A673 (cell line): ENCODE measurements at regions of chr3 and their contacts with region 1.

Region 1: GRCh38 chr3:182182531-182182968 is 470.8 kb downstream of the SOX2 start:
- DNase-seq: peak; percentile 85
- H3K4me3 ChIP-seq: no peak overlapping the region
- H3K27ac ChIP-seq: peak overlapping the region; percentile 90
- H3K4me1 ChIP-seq: peaks cover 44% of the 10 kb centered on the region
- H3K27me3 ChIP-seq: no peaks in the 10 kb centered on the region
- CTCF ChIP-seq: no peak

Region 2: DNA sequence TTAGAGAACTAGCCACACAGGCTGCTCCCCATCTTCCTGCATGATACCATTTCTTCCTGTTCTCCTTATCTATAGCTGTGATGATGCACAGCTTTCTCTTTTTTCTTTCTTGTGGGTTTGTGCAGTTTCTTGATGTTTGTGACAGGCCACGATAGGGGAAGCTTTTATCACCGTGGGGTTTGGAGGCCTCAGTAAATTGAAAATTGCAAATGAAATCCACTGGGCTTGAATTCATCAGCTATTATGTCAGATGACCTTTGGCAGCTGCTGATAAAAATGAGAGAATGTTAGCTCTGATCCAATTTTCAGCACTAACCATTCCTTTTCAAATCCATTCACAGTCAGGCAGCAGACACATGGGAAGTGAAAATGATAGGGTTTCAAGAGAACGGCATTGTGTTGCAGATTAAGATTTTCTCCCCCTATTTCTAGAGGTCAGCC is 647.7 kb before region 1 on chr3:
- CTCF ChIA-PET with region 1: no interaction called
- POLR2A ChIA-PET with region 1: no interaction called
- intact Hi-C with region 1: no loop called
- DNase-seq: no peak
- H3K4me3 ChIP-seq: no peak overlapping the region
- H3K27ac ChIP-seq: no peak overlapping the region
- H3K4me1 ChIP-seq: no peaks in the 10 kb centered on the region
- H3K27me3 ChIP-seq: peaks cover 20% of the 10 kb centered on the region
- CTCF ChIP-seq: no peak

Region 3: GRCh38 chr3:181909241-181909640 is 273.3 kb before region 1 on chr3:
- CTCF ChIA-PET with region 1: interaction called, 3 read pairs
- POLR2A ChIA-PET with region 1: no interaction called
- intact Hi-C with region 1: loop called (anchors 1 kb)
- DNase-seq: peak; percentile 79
- H3K4me3 ChIP-seq: no peak overlapping the region
- H3K27ac ChIP-seq: peak overlapping the region; percentile 55
- H3K4me1 ChIP-seq: peaks cover 12% of the 10 kb centered on the region
- H3K27me3 ChIP-seq: no peaks in the 10 kb centered on the region
- CTCF ChIP-seq: no peak

Region 4: DNA sequence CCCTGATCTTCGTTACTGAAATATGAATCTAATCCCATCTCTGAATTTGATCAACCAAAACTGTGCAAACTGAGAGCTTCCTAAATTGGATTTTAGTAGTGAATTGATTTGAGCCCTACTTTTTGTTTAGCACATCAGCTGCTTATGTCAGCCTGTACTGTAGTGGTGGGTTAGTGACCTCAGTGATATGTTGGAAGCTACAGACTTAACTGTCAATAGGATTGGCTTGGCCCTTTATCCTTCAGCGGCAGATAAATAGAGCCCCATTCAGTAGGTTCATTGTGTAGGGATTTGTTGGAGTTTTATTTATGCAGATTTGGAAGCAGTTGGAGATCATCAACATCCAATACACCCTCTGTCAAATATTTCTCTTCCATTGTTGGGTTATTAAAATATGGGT is 61.1 kb before region 1 on chr3:
- CTCF ChIA-PET with region 1: no interaction called
- POLR2A ChIA-PET with region 1: no interaction called
- intact Hi-C with region 1: loop called (anchors 2 kb)
- DNase-seq: no peak
- H3K4me3 ChIP-seq: no peak overlapping the region
- H3K27ac ChIP-seq: no peak overlapping the region
- H3K4me1 ChIP-seq: peaks cover 48% of the 10 kb centered on the region
- H3K27me3 ChIP-seq: no peaks in the 10 kb centered on the region
- CTCF ChIP-seq: no peak

Region 5: DNA sequence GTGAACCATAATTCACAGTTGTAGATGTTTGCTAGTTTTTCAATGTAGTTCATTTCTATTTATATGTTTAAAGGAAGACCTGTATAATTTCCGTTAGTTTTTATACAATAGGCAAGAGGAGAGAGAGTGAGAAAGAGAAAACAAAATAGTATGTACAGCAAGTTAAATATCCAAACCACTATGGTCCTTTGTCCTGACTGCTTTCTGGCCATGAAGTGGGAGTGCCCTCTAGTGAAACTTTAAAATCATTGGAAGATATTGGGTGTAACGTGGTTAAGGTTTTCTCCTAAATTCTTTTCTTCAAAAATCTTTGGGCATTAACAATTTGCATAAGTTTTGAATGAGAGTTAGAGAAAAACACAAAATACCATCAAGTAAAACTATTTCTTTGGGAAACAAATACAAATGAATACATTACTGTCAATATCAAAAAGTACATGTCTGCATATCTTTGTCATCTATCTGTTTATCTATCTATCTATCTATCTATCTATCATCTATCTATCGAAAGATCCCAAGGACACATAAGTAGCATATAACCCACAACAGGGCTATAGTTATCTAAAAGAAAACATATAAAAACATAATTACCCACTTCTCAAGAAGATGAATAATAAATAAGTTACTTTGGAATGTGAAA is 76.1 kb after region 1 on chr3:
- CTCF ChIA-PET with region 1: interaction called, 5 read pairs
- POLR2A ChIA-PET with region 1: no interaction called
- intact Hi-C with region 1: loop called (anchors 1 kb)
- DNase-seq: peak; percentile 78
- H3K4me3 ChIP-seq: no peak overlapping the region
- H3K27ac ChIP-seq: no peak overlapping the region
- H3K4me1 ChIP-seq: peaks cover 7% of the 10 kb centered on the region
- H3K27me3 ChIP-seq: no peaks in the 10 kb centered on the region
- CTCF ChIP-seq: peak; percentile 77

Region 6: GRCh38 chr3:182473191-182473710 is 290.7 kb after region 1 on chr3:
- CTCF ChIA-PET with region 1: no interaction called
- POLR2A ChIA-PET with region 1: no interaction called
- intact Hi-C with region 1: loop called (anchors 2 kb)
- DNase-seq: peak; percentile 56
- H3K4me3 ChIP-seq: no peak overlapping the region
- H3K27ac ChIP-seq: peak overlapping the region; percentile 66
- H3K4me1 ChIP-seq: peaks cover 7% of the 10 kb centered on the region
- H3K27me3 ChIP-seq: no peaks in the 10 kb centered on the region
- CTCF ChIP-seq: no peak

Region 7: DNA sequence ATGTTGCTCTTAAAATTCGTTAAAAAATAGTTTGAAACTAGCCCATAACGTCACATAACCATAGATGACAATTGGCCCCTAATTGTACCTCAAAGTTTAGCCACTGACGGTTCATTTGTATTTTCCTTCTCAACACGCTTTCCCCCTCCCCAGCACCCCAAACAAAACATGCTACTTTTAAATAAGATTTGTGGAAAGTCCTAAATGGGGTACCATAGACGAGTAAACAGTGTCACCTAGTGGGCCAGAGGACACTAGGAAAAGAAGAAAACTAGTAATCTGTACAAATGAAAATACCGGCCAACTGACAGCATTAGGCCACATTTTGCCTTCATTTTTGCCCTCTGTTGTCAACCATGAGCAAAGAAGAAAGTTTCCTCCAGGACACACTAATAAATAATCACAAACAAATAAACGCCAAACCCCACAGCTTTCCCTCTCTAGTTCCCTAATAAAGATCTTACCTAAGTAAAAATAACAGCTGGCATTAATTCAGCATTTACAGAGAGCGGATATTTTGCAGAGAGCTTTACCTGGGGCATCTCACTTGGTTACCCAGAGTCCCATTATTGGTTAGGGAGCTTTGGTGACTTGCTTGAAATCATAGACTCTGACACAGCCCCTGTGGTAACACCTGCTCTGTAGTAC is 435.7 kb after region 1 on chr3:
- CTCF ChIA-PET with region 1: no interaction called
- POLR2A ChIA-PET with region 1: no interaction called
- intact Hi-C with region 1: loop called (anchors 5 kb)
- DNase-seq: peak; percentile 66
- H3K4me3 ChIP-seq: no peak overlapping the region
- H3K27ac ChIP-seq: no peak overlapping the region
- H3K4me1 ChIP-seq: no peaks in the 10 kb centered on the region
- H3K27me3 ChIP-seq: no peaks in the 10 kb centered on the region
- CTCF ChIP-seq: peak; percentile 71

Region 8: GRCh38 chr3:182683453-182683852 is 500.9 kb after region 1 on chr3:
- CTCF ChIA-PET with region 1: no interaction called
- POLR2A ChIA-PET with region 1: no interaction called
- intact Hi-C with region 1: loop called (anchors 2 kb)
- DNase-seq: peak; percentile 84
- H3K4me3 ChIP-seq: peak overlapping the region; percentile 61
- H3K27ac ChIP-seq: no peak overlapping the region
- H3K4me1 ChIP-seq: peaks cover 12% of the 10 kb centered on the region
- H3K27me3 ChIP-seq: peaks cover 28% of the 10 kb centered on the region
- CTCF ChIP-seq: peak; percentile 96